Common myeloid progenitor, CD34-positive (primary cell): ENCODE measurements at regions of chr17 and their contacts with region 1.

Region 1: GRCh38 chr17:43393944-43394482 is 4.8 kb upstream of the ARL4D start:
- DNase-seq: peak; percentile 86 to 93 (median 87)
- H3K4me3 ChIP-seq: peak overlapping the region in 1 of 7 experiments; percentile 41
- H3K27ac ChIP-seq: no peak overlapping the region
- H3K4me1 ChIP-seq: peaks cover 8 to 30% (median 25%) of the 10 kb centered on the region in 4 experiments
- H3K27me3 ChIP-seq: no peaks in the 10 kb centered on the region

Region 2: GRCh38 chr17:43140396-43141332 is 253.3 kb before region 1 on chr17:
- CTCF ChIA-PET with region 1: no interaction called
- POLR2A ChIA-PET with region 1: no interaction called
- DNase-seq: peak in 2 of 3 donors; percentile 21 to 23
- H3K4me3 ChIP-seq: no peak overlapping the region
- H3K27ac ChIP-seq: no peak overlapping the region
- H3K4me1 ChIP-seq: peaks cover 0 to 12% (median 7%) of the 10 kb centered on the region in 4 experiments
- H3K27me3 ChIP-seq: no peaks in the 10 kb centered on the region

Region 3: DNA sequence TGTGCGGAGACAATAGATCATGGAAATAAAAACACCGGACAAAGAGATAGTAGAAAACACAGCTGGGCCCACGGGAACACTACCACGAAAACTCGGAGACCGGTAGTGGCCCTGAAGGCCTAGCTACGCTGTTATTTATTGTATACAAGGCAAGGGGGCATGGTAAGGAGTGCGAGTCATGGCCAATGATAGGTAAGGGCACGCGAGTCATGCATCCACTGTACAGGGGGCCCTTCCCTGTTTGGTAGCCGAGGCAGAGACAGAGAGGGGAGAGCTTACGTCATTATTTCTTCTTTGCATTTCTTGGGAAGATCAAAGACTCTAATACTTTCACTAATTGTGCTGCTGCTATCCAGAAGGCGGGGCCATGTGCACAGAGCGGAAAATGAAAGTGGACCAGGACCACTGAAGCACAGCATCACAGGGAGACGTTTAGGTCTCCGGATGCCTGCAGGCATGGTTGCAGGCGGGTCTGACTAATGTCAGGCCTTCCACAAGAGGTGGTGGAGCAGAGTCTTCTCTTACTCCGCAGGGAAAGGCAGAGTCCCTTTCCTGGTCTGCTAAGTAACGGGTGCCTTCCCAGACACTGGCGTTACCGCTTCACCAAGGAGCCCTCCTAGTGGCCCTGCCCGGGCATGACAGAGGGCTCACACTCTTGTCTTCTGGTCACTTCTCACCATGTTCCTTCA is 69.7 kb before region 1 on chr17:
- CTCF ChIA-PET with region 1: no interaction called
- POLR2A ChIA-PET with region 1: no interaction called
- DNase-seq: no peak
- H3K4me3 ChIP-seq: no peak overlapping the region
- H3K27ac ChIP-seq: no peak overlapping the region
- H3K4me1 ChIP-seq: no peaks in the 10 kb centered on the region
- H3K27me3 ChIP-seq: peaks cover 0 to 4% (median 0%) of the 10 kb centered on the region in 5 experiments

Region 4: GRCh38 chr17:43416998-43417891 is 23.2 kb after region 1 on chr17:
- CTCF ChIA-PET with region 1: interaction called, 10 read pairs
- POLR2A ChIA-PET with region 1: no interaction called
- DNase-seq: no peak
- H3K4me3 ChIP-seq: no peak overlapping the region
- H3K27ac ChIP-seq: no peak overlapping the region
- H3K4me1 ChIP-seq: peaks cover 0 to 6% (median 0%) of the 10 kb centered on the region in 4 experiments
- H3K27me3 ChIP-seq: peaks cover 0 to 5% (median 2%) of the 10 kb centered on the region in 5 experiments

Region 5: GRCh38 chr17:43428524-43428923 is 34.5 kb after region 1 on chr17:
- CTCF ChIA-PET with region 1: interaction called, 16 read pairs
- POLR2A ChIA-PET with region 1: no interaction called
- DNase-seq: peak in 2 of 3 donors; percentile 12 to 19
- H3K4me3 ChIP-seq: no peak overlapping the region
- H3K27ac ChIP-seq: no peak overlapping the region
- H3K4me1 ChIP-seq: no peaks in the 10 kb centered on the region
- H3K27me3 ChIP-seq: peaks cover 0 to 17% (median 3%) of the 10 kb centered on the region in 5 experiments

Region 6: DNA sequence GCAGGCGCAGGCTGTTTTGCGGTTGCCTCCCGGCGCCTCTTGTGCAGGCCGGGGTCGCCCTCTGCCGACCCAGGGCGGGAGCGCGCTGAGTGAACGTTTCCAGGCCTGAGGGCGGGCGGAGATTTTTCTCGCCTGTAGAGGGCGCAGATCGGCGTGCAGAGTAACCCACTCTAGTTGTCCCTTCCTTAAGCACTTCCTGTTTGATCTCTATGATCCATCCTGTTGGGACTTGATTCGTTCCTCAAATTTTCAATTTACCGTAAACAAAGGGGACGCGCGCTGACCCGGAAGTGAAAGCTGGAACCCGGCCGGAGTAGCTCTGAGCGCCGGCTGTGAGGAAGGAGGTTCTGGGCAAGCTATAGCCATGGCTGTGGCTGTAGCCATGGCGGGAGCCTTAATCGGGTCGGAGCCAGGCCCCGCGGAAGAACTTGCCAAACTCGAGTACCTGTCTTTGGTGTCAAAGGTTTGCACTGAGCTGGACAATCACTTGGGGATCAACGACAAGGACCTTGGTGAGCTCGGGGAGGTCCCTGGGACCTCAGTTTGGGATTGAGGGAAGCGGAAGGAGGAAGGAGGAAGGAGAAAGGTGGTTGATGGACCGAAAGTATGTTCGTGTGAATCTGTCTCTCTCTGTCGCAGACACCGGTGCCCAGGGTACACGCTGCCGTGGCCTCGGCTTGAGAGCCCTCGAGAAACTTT is 89.8 kb after region 1 on chr17 and contains the start of gene DHX8:
- CTCF ChIA-PET with region 1: interaction called, 80 read pairs
- POLR2A ChIA-PET with region 1: interaction called, 8 read pairs
- DNase-seq: peak; percentile 97 to 99 (median 99)
- H3K4me3 ChIP-seq: peak within 1 kb of the TSS; percentile 85 to 97 (median 96)
- H3K27ac ChIP-seq: peak within 1 kb of the TSS; percentile 90
- H3K4me1 ChIP-seq: peaks cover 8 to 24% (median 11%) of the 10 kb centered on the region in 4 experiments
- H3K27me3 ChIP-seq: no peaks in the 10 kb centered on the region